CD14-positive monocyte (primary cell): ENCODE measurements at regions of chr3 and their contacts with region 1.

Region 1: GRCh38 chr3:52144034-52144795 is 10.0 kb downstream of the POC1A start:
- DNase-seq: peak; percentile 68 to 81 (median 76)
- H3K4me3 ChIP-seq: no peak overlapping the region
- H3K4me3 Mint-ChIP-seq: no peak overlapping the region
- H3K27ac ChIP-seq: peak overlapping the region in 1 of 2 donors; percentile 33
- H3K27ac Mint-ChIP-seq: peak overlapping the region in 4 of 7 donors; percentile 7 to 75 (median 23)
- H3K4me1 ChIP-seq: peaks cover 0 to 4% of the 10 kb centered on the region in 2 donors
- H3K4me1 Mint-ChIP-seq: peaks cover 6% of the 10 kb centered on the region
- H3K27me3 ChIP-seq: no peaks in the 10 kb centered on the region
- H3K27me3 Mint-ChIP-seq: no peaks in the 10 kb centered on the region
- CTCF ChIP-seq: peak; percentile 97

Region 2: GRCh38 chr3:51637941-51638471 is 506.2 kb before region 1 on chr3:
- intact Hi-C with region 1: no loop called
- DNase-seq: peak in 2 of 3 donors; percentile 14 to 26
- H3K4me3 ChIP-seq: no peak overlapping the region
- H3K4me3 Mint-ChIP-seq: no peak overlapping the region
- H3K27ac ChIP-seq: no peak overlapping the region
- H3K27ac Mint-ChIP-seq: peak overlapping the region in 1 of 7 donors; percentile 64
- H3K4me1 ChIP-seq: peaks cover 0 to 5% of the 10 kb centered on the region in 2 donors
- H3K4me1 Mint-ChIP-seq: peaks cover 4% of the 10 kb centered on the region
- H3K27me3 ChIP-seq: no peaks in the 10 kb centered on the region
- H3K27me3 Mint-ChIP-seq: no peaks in the 10 kb centered on the region
- CTCF ChIP-seq: peak; percentile 57

Region 3: GRCh38 chr3:52001443-52001974 is 142.7 kb before region 1 on chr3:
- intact Hi-C with region 1: loop called (anchors 1 to 2 kb)
- DNase-seq: peak; percentile 46 to 69 (median 61)
- H3K4me3 ChIP-seq: no peak overlapping the region
- H3K4me3 Mint-ChIP-seq: no peak overlapping the region
- H3K27ac ChIP-seq: no peak overlapping the region
- H3K27ac Mint-ChIP-seq: no peak overlapping the region
- H3K4me1 ChIP-seq: peaks cover 18 to 22% of the 10 kb centered on the region in 2 donors
- H3K4me1 Mint-ChIP-seq: peaks cover 19% of the 10 kb centered on the region
- H3K27me3 ChIP-seq: no peaks in the 10 kb centered on the region
- H3K27me3 Mint-ChIP-seq: peaks cover 2 to 7% (median 6%) of the 10 kb centered on the region in 3 donors
- CTCF ChIP-seq: peak; percentile 95